Heart right ventricle (tissue), 16 donors: ENCODE measurements at regions of chr17 and their contacts with region 1.

Region 1: GRCh38 chr17:8572764-8573163 is 57.8 kb downstream of the MYH10 start:
- DNase-seq: no peak
- ATAC-seq: no peak
- H3K4me3 ChIP-seq: no peak overlapping the region
- H3K27ac ChIP-seq: no peak overlapping the region
- H3K4me1 ChIP-seq: peaks cover 0 to 7% (median 0%) of the 10 kb centered on the region in 9 donors
- H3K27me3 ChIP-seq: no peaks in the 10 kb centered on the region
- CTCF ChIP-seq: peak in 7 of 9 donors; percentile 33 to 64 (median 45)

Region 2: GRCh38 chr17:8522577-8522976 is 50.2 kb before region 1 on chr17:
- intact Hi-C with region 1: loop called in 1 of 10 experiments (anchors 10 kb)
- DNase-seq: no peak
- ATAC-seq: peak in 3 of 8 donors; percentile 31 to 58 (median 44)
- H3K4me3 ChIP-seq: no peak overlapping the region
- H3K27ac ChIP-seq: no peak overlapping the region
- H3K4me1 ChIP-seq: peaks cover 0 to 7% (median 0%) of the 10 kb centered on the region in 9 donors
- H3K27me3 ChIP-seq: no peaks in the 10 kb centered on the region
- CTCF ChIP-seq: no peak

Region 3: GRCh38 chr17:8740486-8740885 is 167.7 kb after region 1 on chr17:
- intact Hi-C with region 1: loop called in 3 of 10 experiments (anchors 1 to 5 kb)
- DNase-seq: no peak
- ATAC-seq: no peak
- H3K4me3 ChIP-seq: peak overlapping the region in 1 of 10 donors; percentile 23
- H3K27ac ChIP-seq: no peak overlapping the region
- H3K4me1 ChIP-seq: peaks cover 0 to 6% (median 0%) of the 10 kb centered on the region in 9 donors
- H3K27me3 ChIP-seq: peaks cover 0 to 4% (median 0%) of the 10 kb centered on the region in 7 donors
- CTCF ChIP-seq: no peak

Region 4: GRCh38 chr17:8745586-8746500 is 173.1 kb after region 1 on chr17:
- intact Hi-C with region 1: loop called (anchors 1 to 5 kb)
- DNase-seq: peak; percentile 71 to 80
- ATAC-seq: peak; percentile 90 to 96 (median 94)
- H3K4me3 ChIP-seq: peak overlapping the region; percentile 54 to 91 (median 74)
- H3K27ac ChIP-seq: peak overlapping the region in 7 of 10 donors; percentile 39 to 88 (median 64)
- H3K4me1 ChIP-seq: peaks cover 0 to 14% (median 5%) of the 10 kb centered on the region in 9 donors
- H3K27me3 ChIP-seq: peaks cover 0 to 5% (median 0%) of the 10 kb centered on the region in 7 donors
- CTCF ChIP-seq: peak; percentile 92 to 99 (median 97)

Region 5: GRCh38 chr17:8753976-8754440 is 181.2 kb after region 1 on chr17:
- intact Hi-C with region 1: loop called in 2 of 10 experiments (anchors 5 kb)
- DNase-seq: no peak
- ATAC-seq: no peak
- H3K4me3 ChIP-seq: no peak overlapping the region
- H3K27ac ChIP-seq: no peak overlapping the region
- H3K4me1 ChIP-seq: peaks cover 0 to 5% (median 0%) of the 10 kb centered on the region in 9 donors
- H3K27me3 ChIP-seq: peaks cover 0 to 18% (median 0%) of the 10 kb centered on the region in 7 donors
- CTCF ChIP-seq: peak in 5 of 9 donors; percentile 12 to 36 (median 20)

Region 6: GRCh38 chr17:8785547-8786413 is 213.0 kb after region 1 on chr17:
- intact Hi-C with region 1: no loop called
- DNase-seq: peak; percentile 80 to 83
- ATAC-seq: peak; percentile 80 to 93 (median 89)
- H3K4me3 ChIP-seq: no peak overlapping the region
- H3K27ac ChIP-seq: no peak overlapping the region
- H3K4me1 ChIP-seq: peaks cover 0 to 20% (median 0%) of the 10 kb centered on the region in 9 donors
- H3K27me3 ChIP-seq: no peaks in the 10 kb centered on the region
- CTCF ChIP-seq: peak; percentile 48 to 94 (median 88)

Region 7: GRCh38 chr17:8894673-8895578 is 322.2 kb after region 1 on chr17:
- intact Hi-C with region 1: loop called in 2 of 10 experiments (anchors 10 kb)
- DNase-seq: peak in 1 of 2 donors; percentile 61
- ATAC-seq: peak; percentile 72 to 91 (median 82)
- H3K4me3 ChIP-seq: peak overlapping the region in 2 of 10 donors; percentile 9 to 13
- H3K27ac ChIP-seq: no peak overlapping the region
- H3K4me1 ChIP-seq: peaks cover 0 to 39% (median 0%) of the 10 kb centered on the region in 9 donors
- H3K27me3 ChIP-seq: peaks cover 0 to 13% (median 0%) of the 10 kb centered on the region in 7 donors
- CTCF ChIP-seq: peak; percentile 73 to 91 (median 85)